Dorsolateral prefrontal cortex (tissue), 120 donors: ENCODE measurements at regions of chr6 and their contacts with region 1.

Region 1: DNA sequence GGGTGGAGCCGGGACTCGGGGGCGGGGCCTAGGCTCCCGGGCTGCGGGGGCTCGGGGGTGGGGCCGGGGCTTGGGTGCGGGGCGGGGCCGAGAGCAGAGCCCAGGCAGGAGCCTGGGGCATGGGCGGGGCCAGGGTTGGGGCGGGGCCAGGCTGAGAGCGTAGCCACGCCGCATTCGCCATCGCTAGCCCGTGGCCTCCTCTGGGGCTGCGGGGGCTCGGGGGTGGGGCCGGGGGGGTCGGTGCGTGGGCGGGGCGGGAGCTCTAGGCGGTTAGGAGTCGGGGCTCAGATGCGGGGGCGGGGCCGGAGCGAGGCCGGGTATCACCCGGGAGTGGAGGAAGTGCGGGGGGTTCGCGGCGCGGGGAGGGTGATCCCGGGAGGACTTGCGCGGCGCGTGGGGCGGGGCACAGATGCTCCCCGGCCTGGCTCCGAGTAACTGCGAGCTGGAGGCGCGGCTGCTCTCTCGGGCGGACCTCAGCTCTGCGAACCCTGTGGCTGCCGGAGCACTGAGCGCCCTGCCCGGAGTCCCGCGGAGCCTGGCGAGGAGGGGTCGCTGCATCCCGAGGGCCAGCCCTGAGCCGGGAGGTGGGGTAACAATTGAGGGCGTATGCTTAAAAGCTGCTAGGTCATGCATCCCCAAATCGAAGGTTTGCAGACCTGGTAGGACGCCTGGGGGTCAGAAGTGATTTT is 434 bp upstream of the ECI2 start:
- DNase-seq: peak; percentile 93 to 100 (median 98)
- H3K4me3 ChIP-seq: peak overlapping the region; percentile 62 to 98 (median 88)
- H3K27ac ChIP-seq: peak overlapping the region; percentile 7 to 95 (median 89)
- H3K27me3 ChIP-seq: no peaks in the 10 kb centered on the region
- CTCF ChIP-seq: peak in 32 of 56 donors; percentile 5 to 49 (median 25)

Region 2: GRCh38 chr6:4018172-4018905 is 117.5 kb before region 1 on chr6:
- intact Hi-C with region 1: loop called (anchors 5 kb)
- DNase-seq: peak; percentile 83 to 97 (median 92)
- H3K4me3 ChIP-seq: peak overlapping the region; percentile 55 to 97 (median 85)
- H3K27ac ChIP-seq: peak overlapping the region; percentile 82 to 100 (median 97)
- H3K27me3 ChIP-seq: no peaks in the 10 kb centered on the region
- CTCF ChIP-seq: peak in 55 of 56 donors; percentile 32 to 80 (median 59)

Region 3: DNA sequence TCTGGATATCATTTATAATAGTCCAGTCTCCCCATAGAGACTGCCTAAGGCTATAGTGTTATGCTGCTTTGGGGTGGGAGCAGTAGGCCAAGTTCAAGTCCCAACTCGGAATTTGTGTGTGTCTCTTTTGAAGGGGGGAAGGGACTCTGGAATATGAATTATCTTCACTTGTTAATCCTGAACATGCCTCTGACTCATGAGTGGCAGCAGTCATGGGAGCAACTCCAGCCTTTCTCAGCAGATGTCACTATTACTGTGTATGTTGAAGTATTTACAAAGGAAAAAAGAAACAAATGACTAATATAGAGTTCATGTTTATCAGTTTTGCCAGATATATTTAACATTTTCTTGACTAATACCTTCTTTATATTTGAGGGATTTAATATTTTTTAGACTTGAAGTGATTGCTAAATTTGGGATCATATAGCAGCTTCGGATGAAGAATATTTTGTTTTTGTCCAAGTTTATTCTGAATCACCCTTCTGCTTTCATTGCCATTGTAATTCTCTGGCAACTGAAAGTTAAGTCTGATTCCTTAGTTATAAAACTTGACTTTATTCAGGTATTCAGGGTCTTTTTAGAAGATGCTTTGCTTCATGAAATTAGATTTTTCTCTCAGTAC is 80.3 kb before region 1 on chr6:
- intact Hi-C with region 1: loop called in 1 of 2 experiments (anchors 5 kb)
- DNase-seq: peak in 3 of 10 donors; percentile 19 to 53 (median 40)
- H3K4me3 ChIP-seq: no peak overlapping the region
- H3K27ac ChIP-seq: peak overlapping the region in 32 of 59 donors; percentile 4 to 71 (median 28)
- H3K27me3 ChIP-seq: no peaks in the 10 kb centered on the region
- CTCF ChIP-seq: peak; percentile 22 to 80 (median 58)